ENCODE measurements at regions of chr3 and their contacts with region 1.

Region 1: GRCh38 chr3:52291508-52292181 is 4.0 kb downstream of the GLYCTK start:
- DNase-seq: no peak
- H3K4me3 Mint-ChIP-seq: no peak overlapping the region
- H3K27ac Mint-ChIP-seq: no peak overlapping the region
- H3K4me1 Mint-ChIP-seq: peaks cover 27% of the 10 kb centered on the region
- H3K27me3 Mint-ChIP-seq: no peaks in the 10 kb centered on the region

Region 2: GRCh38 chr3:51982782-51983577 is 308.7 kb before region 1 on chr3 and contains the start of gene ACY1:
- intact Hi-C with region 1: loop called (anchors 5 kb)
- DNase-seq: peak; percentile 79
- H3K4me3 Mint-ChIP-seq: peak within 1 kb of the TSS; percentile 97
- H3K27ac Mint-ChIP-seq: peak within 1 kb of the TSS; percentile 97
- H3K4me1 Mint-ChIP-seq: peaks cover 30% of the 10 kb centered on the region
- H3K27me3 Mint-ChIP-seq: no peaks in the 10 kb centered on the region
- total RNA-seq, gene ACY1: 58.0 and 58.5 TPM in 2 replicates

Region 3: DNA sequence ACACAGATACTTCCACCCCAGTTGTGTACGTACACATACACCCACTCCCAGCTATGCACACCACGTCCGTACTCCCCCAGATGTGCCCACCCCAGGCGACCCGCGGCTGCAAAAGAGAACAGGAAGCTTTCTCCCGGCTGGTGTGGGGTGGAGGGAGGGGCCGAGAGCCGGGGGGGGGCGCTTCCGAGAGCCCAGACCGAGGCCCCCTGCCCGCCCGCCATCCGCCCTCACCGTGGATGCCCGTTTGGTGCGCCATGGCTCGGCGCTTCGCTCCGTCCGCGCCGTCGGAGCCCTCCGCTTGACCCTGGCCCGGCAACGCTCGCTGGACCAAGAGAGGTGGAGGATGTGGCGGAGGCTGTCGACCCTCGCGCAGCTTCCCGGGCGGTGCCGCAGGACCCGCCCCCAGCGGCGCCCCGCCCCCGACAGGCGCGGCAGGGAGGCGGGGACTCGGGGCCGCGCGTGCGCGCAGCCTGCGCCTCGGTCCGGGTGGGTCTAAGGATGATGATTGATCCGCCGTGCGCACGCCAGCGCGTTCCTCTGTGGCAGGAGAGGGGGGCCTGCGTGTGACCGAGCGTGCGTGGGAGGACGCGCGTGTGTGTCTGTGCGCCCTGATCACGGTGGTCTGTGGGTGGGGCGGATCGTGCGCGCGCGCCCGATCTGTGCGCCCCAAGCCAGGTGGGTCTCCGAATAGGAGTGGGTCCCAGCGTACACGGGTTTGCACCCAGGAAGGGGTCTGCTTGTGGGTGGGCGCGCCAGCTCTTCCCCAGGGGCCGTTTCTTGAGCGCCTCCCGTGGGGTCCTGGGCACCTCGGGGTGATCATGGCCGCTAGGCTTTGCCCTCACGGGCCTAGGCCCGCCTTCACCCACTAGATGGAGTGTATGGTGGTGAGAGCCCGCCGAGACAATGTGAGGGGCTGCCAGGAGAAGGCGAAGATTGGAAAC is 52.6 kb before region 1 on chr3 and contains the start of gene TWF2:
- intact Hi-C with region 1: loop called (anchors 1 kb)
- DNase-seq: peak; percentile 87
- H3K4me3 Mint-ChIP-seq: peak within 1 kb of the TSS; percentile 95
- H3K27ac Mint-ChIP-seq: peak within 1 kb of the TSS; percentile 98
- H3K4me1 Mint-ChIP-seq: peaks cover 75% of the 10 kb centered on the region
- H3K27me3 Mint-ChIP-seq: no peaks in the 10 kb centered on the region
- total RNA-seq, gene TWF2: 94.3 and 98.6 TPM in 2 replicates

Region 4: GRCh38 chr3:52270252-52270754 is 21.3 kb before region 1 on chr3:
- intact Hi-C with region 1: loop called (anchors 2 kb)
- DNase-seq: no peak
- H3K4me3 Mint-ChIP-seq: peak overlapping the region; percentile 81
- H3K27ac Mint-ChIP-seq: peak overlapping the region; percentile 88
- H3K4me1 Mint-ChIP-seq: peaks cover 76% of the 10 kb centered on the region
- H3K27me3 Mint-ChIP-seq: no peaks in the 10 kb centered on the region

Region 5: DNA sequence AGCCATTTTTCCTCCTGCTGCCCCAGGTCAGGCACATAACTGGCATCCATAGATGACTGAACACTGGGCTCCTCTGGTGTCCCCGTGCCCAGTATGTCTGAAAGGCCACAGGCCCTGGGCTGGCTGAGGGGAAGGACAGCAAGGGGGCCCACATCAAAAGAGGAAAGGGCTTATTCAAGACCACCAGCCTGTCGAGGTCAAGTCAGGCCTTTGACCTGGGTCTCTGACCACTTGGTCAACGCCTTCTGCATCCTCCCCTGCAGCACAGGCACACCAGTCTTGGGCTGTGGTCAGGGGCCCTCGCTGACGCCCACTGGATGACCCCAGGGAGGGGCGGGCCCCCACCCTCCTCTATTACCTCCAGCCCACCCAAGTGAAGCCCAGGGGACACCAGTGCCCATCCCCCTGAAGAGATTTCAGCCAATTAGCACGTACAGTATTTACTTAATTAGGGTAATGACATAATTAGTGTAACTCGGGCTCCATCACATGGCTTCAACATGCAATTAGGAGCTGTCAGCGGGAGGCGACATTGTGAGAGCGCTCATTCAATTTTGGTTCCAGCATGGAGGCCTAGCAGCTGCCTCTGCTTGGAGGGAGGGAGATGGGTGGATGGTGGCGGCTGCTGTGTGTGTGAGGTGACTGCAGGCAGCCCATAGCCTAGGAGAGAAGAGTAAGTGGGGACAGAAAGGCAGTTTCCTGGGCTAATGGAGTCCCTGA is 10.9 kb after region 1 on chr3:
- intact Hi-C with region 1: no loop called
- DNase-seq: no peak
- H3K4me3 Mint-ChIP-seq: no peak overlapping the region
- H3K27ac Mint-ChIP-seq: no peak overlapping the region
- H3K4me1 Mint-ChIP-seq: peaks cover 6% of the 10 kb centered on the region
- H3K27me3 Mint-ChIP-seq: no peaks in the 10 kb centered on the region

Region 6: DNA sequence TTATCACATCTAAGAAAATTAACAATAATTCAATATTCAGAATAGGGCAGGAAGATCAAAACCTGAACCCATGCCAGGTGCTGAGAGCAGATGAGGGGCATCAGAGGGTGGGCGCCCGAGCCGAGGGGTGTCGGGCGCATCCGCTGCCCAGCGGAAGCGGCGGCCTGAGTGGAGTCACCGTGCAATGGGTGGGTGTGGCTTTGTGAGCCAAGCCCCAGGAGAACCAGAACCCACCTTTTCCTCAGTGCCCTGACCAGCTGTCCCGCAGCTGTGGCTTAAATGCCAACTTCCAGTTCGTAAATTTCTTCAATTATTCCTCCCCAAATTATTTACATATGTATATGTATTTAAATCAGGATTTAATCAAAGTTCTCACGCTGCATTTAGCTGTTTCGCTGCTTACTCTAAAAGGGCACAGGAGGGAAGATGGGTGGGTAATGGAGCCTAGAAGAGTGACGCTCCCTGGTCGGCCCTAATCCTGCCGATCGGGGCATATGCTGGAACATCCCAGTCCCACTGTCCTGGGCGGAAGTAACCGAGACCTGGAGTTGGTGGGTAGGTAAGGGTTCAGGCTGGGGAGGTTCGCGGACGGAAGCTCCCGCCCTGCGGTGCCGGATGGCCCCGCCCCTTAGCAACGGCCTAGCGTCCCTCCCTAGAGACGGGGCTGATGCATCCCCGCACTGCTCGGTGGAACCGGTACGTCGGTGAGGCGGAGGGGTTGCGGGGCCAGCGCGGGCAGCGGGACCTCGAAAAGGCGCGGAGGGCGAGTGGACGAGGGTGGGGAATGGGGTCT is 25.8 kb after region 1 on chr3:
- intact Hi-C with region 1: loop called (anchors 2 kb)
- DNase-seq: peak; percentile 71
- H3K4me3 Mint-ChIP-seq: peak overlapping the region; percentile 42
- H3K27ac Mint-ChIP-seq: no peak overlapping the region
- H3K4me1 Mint-ChIP-seq: peaks cover 20% of the 10 kb centered on the region
- H3K27me3 Mint-ChIP-seq: no peaks in the 10 kb centered on the region